A673 (cell line): ENCODE measurements at regions of chr9 and their contacts with region 1.

Region 1: GRCh38 chr9:70060883-70061507 is 17.3 kb downstream of the MAMDC2 start:
- DNase-seq: no peak
- H3K4me3 ChIP-seq: no peak overlapping the region
- H3K27ac ChIP-seq: no peak overlapping the region
- H3K4me1 ChIP-seq: no peaks in the 10 kb centered on the region
- H3K27me3 ChIP-seq: peaks cover 43% of the 10 kb centered on the region
- CTCF ChIP-seq: no peak

Region 2: GRCh38 chr9:69829484-69829883 is 231.5 kb before region 1 on chr9:
- CTCF ChIA-PET with region 1: no interaction called
- POLR2A ChIA-PET with region 1: no interaction called
- intact Hi-C with region 1: no loop called
- DNase-seq: no peak
- H3K4me3 ChIP-seq: no peak overlapping the region
- H3K27ac ChIP-seq: no peak overlapping the region
- H3K4me1 ChIP-seq: peaks cover 16% of the 10 kb centered on the region
- H3K27me3 ChIP-seq: no peaks in the 10 kb centered on the region
- CTCF ChIP-seq: no peak

Region 3: DNA sequence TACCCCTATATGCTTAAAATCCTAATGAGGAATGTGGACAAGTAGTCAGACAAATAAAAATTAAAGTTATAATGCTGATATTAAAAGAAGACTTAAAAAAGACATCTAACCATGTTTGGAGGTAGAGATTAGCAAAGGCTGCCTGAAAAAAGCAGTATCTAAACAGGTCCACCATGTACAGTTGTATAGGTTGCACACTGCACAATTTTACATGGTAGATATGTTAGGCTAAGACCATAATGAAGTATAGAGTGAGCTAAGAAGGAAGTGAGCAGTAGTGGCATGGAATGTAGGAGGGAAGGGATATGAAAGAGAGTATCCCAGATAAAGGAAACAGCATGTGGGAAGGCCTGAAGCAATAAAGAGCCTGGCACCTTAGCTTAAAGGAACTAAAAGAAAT is 33.8 kb after region 1 on chr9:
- CTCF ChIA-PET with region 1: no interaction called
- POLR2A ChIA-PET with region 1: no interaction called
- intact Hi-C with region 1: loop called (anchors 5 kb)
- DNase-seq: no peak
- H3K4me3 ChIP-seq: no peak overlapping the region
- H3K27ac ChIP-seq: no peak overlapping the region
- H3K4me1 ChIP-seq: no peaks in the 10 kb centered on the region
- H3K27me3 ChIP-seq: peaks cover 32% of the 10 kb centered on the region
- CTCF ChIP-seq: no peak

Region 4: GRCh38 chr9:70217029-70217428 is 156.0 kb after region 1 on chr9:
- CTCF ChIA-PET with region 1: no interaction called
- POLR2A ChIA-PET with region 1: no interaction called
- intact Hi-C with region 1: no loop called
- DNase-seq: no peak
- H3K4me3 ChIP-seq: no peak overlapping the region
- H3K27ac ChIP-seq: no peak overlapping the region
- H3K4me1 ChIP-seq: no peaks in the 10 kb centered on the region
- H3K27me3 ChIP-seq: no peaks in the 10 kb centered on the region
- CTCF ChIP-seq: no peak

Region 5: GRCh38 chr9:71741711-71742648 is 1681.0 kb after region 1 on chr9:
- CTCF ChIA-PET with region 1: no interaction called
- POLR2A ChIA-PET with region 1: no interaction called
- intact Hi-C with region 1: no loop called
- DNase-seq: no peak
- H3K4me3 ChIP-seq: no peak overlapping the region
- H3K27ac ChIP-seq: no peak overlapping the region
- H3K4me1 ChIP-seq: no peaks in the 10 kb centered on the region
- H3K27me3 ChIP-seq: no peaks in the 10 kb centered on the region
- CTCF ChIP-seq: no peak